Breast epithelium (tissue), 4 donors: ENCODE measurements at regions of chr11 and their contacts with region 1.

Region 1: DNA sequence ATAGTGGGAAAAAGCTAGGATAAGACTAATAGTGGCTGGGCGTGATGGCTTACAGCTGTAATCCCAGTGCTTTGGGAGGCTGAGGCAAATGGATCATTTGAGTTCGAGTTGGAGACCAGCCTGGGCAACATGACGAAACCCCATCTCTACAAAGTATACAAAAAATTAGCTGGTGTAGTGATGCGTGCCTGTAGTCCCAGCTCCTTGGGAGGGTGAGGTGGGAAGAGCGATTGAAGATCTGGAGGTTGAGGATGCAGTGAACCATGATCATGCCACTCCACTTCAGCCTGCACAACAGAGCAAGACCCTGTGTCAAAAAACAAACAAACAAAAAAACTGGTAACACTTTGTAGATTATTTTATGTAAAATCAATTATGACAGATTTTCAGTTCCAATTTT is 8.8 kb downstream of the ARHGAP42 start:
- DNase-seq: no peak
- H3K4me3 ChIP-seq: no peak overlapping the region
- H3K27ac ChIP-seq: no peak overlapping the region
- H3K4me1 ChIP-seq: no peaks in the 10 kb centered on the region
- H3K27me3 ChIP-seq: no peaks in the 10 kb centered on the region
- CTCF ChIP-seq: no peak
- POLR2A ChIP-seq: no peak

Region 2: DNA sequence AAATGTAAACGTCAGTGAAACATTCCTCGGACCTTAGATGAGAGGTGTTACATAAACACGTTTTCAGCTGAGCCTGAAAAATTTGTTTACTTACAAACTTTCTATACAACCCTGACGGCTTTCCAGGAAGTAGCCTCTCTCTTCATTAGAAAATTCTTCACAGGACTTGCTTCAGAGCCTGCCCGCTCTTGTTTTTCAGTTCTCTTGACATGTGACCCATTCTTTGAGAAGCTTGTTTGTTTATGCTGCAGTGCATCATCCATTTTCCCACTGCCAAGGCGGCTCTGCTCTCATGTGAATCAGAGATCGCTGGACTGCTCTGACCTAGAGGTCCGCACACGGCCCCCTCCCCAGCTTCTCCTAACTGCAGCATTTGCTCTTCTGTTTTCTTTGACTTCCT is 56.8 kb before region 1 on chr11:
- intact Hi-C with region 1: loop called (anchors 2 kb)
- DNase-seq: no peak
- H3K4me3 ChIP-seq: no peak overlapping the region
- H3K27ac ChIP-seq: peak overlapping the region in 1 of 2 donors; percentile 28
- H3K4me1 ChIP-seq: no peaks in the 10 kb centered on the region
- H3K27me3 ChIP-seq: no peaks in the 10 kb centered on the region
- CTCF ChIP-seq: no peak
- POLR2A ChIP-seq: no peak